ENCODE measurements at regions of chr20 and their contacts with region 1.

Region 1: GRCh38 chr20:53216856-53217576 is 244.9 kb downstream of the TSHZ2 start:
- DNase-seq: peak; percentile 28
- ATAC-seq: peak; percentile 99
- H3K4me3 ChIP-seq: no peak overlapping the region
- H3K27ac ChIP-seq: no peak overlapping the region
- H3K4me1 ChIP-seq: no peaks in the 10 kb centered on the region
- H3K27me3 ChIP-seq: peaks cover 18% of the 10 kb centered on the region
- CTCF ChIP-seq: peak; percentile 57 to 90 (median 83); a peak in 5 of 6 replicates
- POLR2A ChIP-seq: no peak
- RAD21 ChIP-seq: peak; percentile 69

Region 2: GRCh38 chr20:52242237-52243230 is 974.5 kb before region 1 on chr20:
- CTCF ChIA-PET with region 1: no interaction called
- POLR2A ChIA-PET with region 1: no interaction called
- RAD21 ChIA-PET with region 1: no interaction called
- intact Hi-C with region 1: loop called (anchors 1 kb)
- DNase-seq: no peak
- ATAC-seq: no peak
- H3K4me3 ChIP-seq: no peak overlapping the region
- H3K27ac ChIP-seq: no peak overlapping the region
- H3K4me1 ChIP-seq: no peaks in the 10 kb centered on the region
- H3K27me3 ChIP-seq: no peaks in the 10 kb centered on the region
- CTCF ChIP-seq: peak in 2 of 3 experiments; percentile 26 to 71; a peak in 3 of 6 replicates
- POLR2A ChIP-seq: no peak
- RAD21 ChIP-seq: peak; percentile 45

Region 3: GRCh38 chr20:52312132-52312729 is 904.8 kb before region 1 on chr20:
- CTCF ChIA-PET with region 1: interaction called, 7 read pairs
- POLR2A ChIA-PET with region 1: no interaction called
- RAD21 ChIA-PET with region 1: no interaction called
- intact Hi-C with region 1: loop called (anchors 10 kb)
- DNase-seq: peak; percentile 54
- ATAC-seq: peak; percentile 75
- H3K4me3 ChIP-seq: no peak overlapping the region
- H3K27ac ChIP-seq: no peak overlapping the region
- H3K4me1 ChIP-seq: no peaks in the 10 kb centered on the region
- H3K27me3 ChIP-seq: peaks cover 20% of the 10 kb centered on the region
- CTCF ChIP-seq: peak; percentile 47 to 88 (median 65); a peak in 4 of 6 replicates
- POLR2A ChIP-seq: no peak
- RAD21 ChIP-seq: peak; percentile 56

Region 4: GRCh38 chr20:53157443-53158408 is 59.3 kb before region 1 on chr20:
- CTCF ChIA-PET with region 1: no interaction called
- POLR2A ChIA-PET with region 1: no interaction called
- RAD21 ChIA-PET with region 1: no interaction called
- intact Hi-C with region 1: loop called (anchors 5 kb)
- DNase-seq: peak; percentile 72
- ATAC-seq: peak; percentile 76
- H3K4me3 ChIP-seq: no peak overlapping the region
- H3K27ac ChIP-seq: no peak overlapping the region
- H3K4me1 ChIP-seq: peaks cover 3 to 8% of the 10 kb centered on the region in 2 experiments; a peak in 3 of 4 replicates
- H3K27me3 ChIP-seq: 0 out of 2 replicates have a peak, but pooled peaks cover 5% of the 10 kb centered on the region
- CTCF ChIP-seq: peak; percentile 37 to 80 (median 77); a peak in 5 of 6 replicates
- POLR2A ChIP-seq: no peak
- RAD21 ChIP-seq: peak; percentile 45; the same call in 1 of the 2 replicates